ENCODE measurements at regions of chr12 and their contacts with region 1.

Region 1: DNA sequence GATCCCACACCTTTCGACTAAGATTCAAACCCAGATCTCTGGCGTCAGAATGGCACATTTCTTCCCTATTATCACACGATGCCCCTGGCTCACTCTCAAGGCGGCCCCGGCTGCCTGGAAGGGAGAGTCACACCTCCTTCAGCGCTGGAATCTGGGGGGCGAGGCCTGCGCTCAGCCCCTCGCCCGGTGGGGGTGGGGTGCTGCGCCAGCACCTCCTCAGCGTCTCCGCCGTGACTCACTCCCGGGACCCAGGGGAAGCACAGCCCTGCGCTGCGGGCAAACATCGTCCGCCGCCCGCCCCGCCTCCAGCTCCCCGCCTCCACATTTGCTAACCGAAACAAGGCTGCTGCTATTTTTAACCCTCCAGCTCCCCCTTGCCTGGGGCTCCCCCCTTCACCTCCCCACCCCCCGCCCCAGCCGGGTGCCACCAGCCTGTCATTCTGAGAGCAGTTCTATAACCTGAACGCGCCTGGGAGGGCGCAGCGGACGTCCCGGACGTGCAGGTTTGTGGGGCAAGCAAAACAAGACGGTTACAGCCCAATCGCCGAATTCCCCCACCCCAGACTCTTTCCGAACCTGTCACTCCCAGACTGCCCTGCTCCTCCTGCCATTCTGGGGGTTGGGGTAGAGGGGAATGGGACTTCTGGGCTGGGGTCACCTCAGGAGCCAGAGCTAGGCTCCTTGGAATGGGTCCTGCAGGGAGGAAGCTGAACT is 6.7 kb downstream of the HDAC7 start:
- DNase-seq: peak; percentile 99
- H3K4me3 Mint-ChIP-seq: peak overlapping the region; percentile 88
- H3K27ac Mint-ChIP-seq: peak overlapping the region; percentile 98
- H3K4me1 Mint-ChIP-seq: peaks cover 75% of the 10 kb centered on the region
- H3K27me3 Mint-ChIP-seq: no peaks in the 10 kb centered on the region

Region 2: GRCh38 chr12:47361389-47362021 is 451.4 kb before region 1 on chr12:
- CTCF ChIA-PET with region 1: no interaction called
- intact Hi-C with region 1: loop called (anchors 2 kb)
- DNase-seq: peak; percentile 81
- H3K4me3 Mint-ChIP-seq: peak overlapping the region; percentile 72
- H3K27ac Mint-ChIP-seq: peak overlapping the region; percentile 98
- H3K4me1 Mint-ChIP-seq: peaks cover 58% of the 10 kb centered on the region
- H3K27me3 Mint-ChIP-seq: no peaks in the 10 kb centered on the region

Region 3: DNA sequence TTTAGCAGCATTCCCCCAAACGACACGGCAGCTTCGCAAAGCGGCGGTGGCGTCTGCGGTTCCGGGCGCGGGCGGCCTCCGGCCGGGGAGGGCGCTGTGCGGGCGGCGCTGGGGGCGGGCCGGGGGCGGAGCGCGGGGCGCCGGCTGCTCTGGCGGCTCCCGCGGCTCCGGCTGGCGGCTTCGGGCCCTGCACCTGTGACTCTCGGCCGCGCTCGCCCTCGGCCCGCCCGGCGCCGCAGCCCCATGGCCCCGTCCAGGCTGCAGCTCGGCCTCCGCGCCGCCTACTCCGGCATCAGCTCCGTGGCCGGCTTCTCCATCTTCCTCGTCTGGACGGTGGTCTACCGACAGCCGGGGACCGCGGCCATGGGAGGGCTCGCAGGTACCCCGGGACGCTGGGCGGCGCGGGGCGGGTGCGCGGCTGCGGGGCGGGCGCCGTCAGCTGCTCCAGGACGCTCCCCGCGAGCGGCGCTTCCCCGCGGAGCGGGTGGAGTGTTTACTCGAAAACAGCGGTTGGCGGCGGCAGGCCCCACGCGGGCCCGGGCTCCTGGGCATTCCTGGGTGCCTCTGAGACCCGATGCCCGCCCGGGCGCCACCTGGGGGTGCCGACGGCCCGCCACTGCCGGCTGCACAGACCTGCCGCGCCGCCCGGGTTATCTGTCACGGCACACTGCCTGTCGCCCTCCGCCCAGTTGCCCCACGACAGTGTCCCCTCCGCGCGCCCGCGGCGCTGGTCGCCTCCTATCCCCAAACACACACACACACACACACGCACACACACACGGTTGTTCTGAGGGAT is 39.7 kb before region 1 on chr12 and contains the start of gene SLC48A1:
- CTCF ChIA-PET with region 1: interaction called, 10 read pairs
- intact Hi-C with region 1: loop called (anchors 1 kb)
- DNase-seq: peak; percentile 79
- H3K4me3 Mint-ChIP-seq: peak within 1 kb of the TSS; percentile 90
- H3K27ac Mint-ChIP-seq: peak within 1 kb of the TSS; percentile 13
- H3K4me1 Mint-ChIP-seq: peaks cover 28% of the 10 kb centered on the region
- H3K27me3 Mint-ChIP-seq: no peaks in the 10 kb centered on the region
- total RNA-seq, gene SLC48A1: 16.6 to 21.0 TPM

Region 4: GRCh38 chr12:47828608-47829536 is 15.9 kb after region 1 on chr12:
- CTCF ChIA-PET with region 1: interaction called, 848 read pairs
- intact Hi-C with region 1: loop called (anchors 1 kb)
- DNase-seq: peak; percentile 63
- H3K4me3 Mint-ChIP-seq: peak overlapping the region; percentile 63
- H3K27ac Mint-ChIP-seq: peak overlapping the region; percentile 86
- H3K4me1 Mint-ChIP-seq: peaks cover 86% of the 10 kb centered on the region
- H3K27me3 Mint-ChIP-seq: no peaks in the 10 kb centered on the region

Region 5: DNA sequence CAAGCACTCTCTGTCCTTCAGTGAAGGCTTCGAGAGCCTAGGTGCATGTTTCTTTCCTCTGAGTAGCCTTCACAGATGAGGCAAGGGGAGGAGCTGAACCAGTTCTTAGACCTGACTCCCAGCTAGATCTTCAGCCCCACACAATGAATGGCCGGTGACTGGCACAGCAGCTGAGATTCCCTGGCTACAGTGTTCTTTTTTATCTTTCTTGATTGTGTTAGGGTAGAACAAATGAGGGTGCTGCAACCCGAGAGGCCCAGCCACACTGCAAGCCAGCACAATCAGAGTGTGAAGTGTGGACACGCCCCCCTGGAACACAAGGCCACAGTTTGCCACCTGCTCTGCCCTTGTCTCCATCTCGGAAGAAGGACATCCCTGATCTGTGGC is 210.4 kb after region 1 on chr12:
- CTCF ChIA-PET with region 1: no interaction called
- intact Hi-C with region 1: no loop called
- DNase-seq: no peak
- H3K4me3 Mint-ChIP-seq: no peak overlapping the region
- H3K27ac Mint-ChIP-seq: no peak overlapping the region
- H3K4me1 Mint-ChIP-seq: no peaks in the 10 kb centered on the region
- H3K27me3 Mint-ChIP-seq: peaks cover 2% of the 10 kb centered on the region

Region 6: DNA sequence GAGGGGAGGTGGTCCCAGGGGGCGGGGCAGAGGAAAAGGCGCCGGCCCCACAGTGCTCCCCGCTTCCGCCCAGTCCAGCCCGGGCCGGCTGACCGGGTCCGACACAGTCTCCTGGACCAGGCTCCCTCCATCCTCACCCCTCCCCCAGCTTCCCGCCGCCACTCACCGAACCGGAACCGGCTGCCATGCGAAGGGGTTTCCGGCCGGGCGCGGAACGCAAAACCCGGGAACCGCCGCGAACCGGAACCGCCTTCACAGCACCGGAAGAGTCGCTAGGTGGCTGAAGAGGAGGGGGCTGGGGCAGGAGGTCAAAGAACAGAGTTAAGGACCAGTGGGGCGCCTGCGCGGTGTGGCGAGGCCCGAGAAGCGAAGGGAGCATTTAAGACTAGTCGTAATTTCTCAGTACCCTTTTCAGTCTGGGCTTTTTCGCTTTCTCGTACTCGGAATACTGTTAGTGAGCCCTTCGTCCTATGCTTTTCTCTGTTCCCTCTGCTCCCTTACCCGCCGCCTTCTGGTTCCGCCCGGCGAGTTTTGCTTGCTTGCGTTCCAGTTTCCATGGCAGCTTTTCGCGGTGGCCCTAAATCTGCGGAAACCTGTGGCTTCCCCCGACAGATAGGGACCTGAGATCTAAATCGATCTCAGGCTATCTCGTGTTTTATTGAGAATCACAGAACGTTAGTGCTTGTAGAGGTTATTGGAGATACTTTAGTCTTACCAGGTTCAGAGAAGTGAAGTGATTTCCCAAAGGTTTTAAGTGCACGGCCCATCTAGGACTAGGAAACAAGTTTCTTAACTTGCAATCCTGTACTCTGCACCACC is 293.1 kb after region 1 on chr12 and contains the start of gene SENP1:
- CTCF ChIA-PET with region 1: no interaction called
- intact Hi-C with region 1: loop called (anchors 5 kb)
- DNase-seq: peak; percentile 94
- H3K4me3 Mint-ChIP-seq: peak within 1 kb of the TSS; percentile 87
- H3K27ac Mint-ChIP-seq: peak within 1 kb of the TSS; percentile 96
- H3K4me1 Mint-ChIP-seq: peaks cover 47% of the 10 kb centered on the region
- H3K27me3 Mint-ChIP-seq: no peaks in the 10 kb centered on the region
- total RNA-seq, gene SENP1: 41.4 to 47.8 TPM

Measured in activated naive CD4-positive, alpha-beta T cell treated with anti-CD3 and anti-CD28 coated beads for 36 hours (primary cell).